HCT116 (cell line): ENCODE measurements at regions of chr16 and their contacts with region 1.

Region 1: GRCh38 chr16:67372664-67373063 is 20.6 kb downstream of the TPPP3 start:
- DNase-seq: peak; percentile 12
- ATAC-seq: peak; percentile 69
- H3K4me3 ChIP-seq: no peak overlapping the region
- H3K27ac ChIP-seq: no peak overlapping the region
- H3K4me1 ChIP-seq: no peaks in the 10 kb centered on the region
- H3K27me3 ChIP-seq: no peaks in the 10 kb centered on the region
- CTCF ChIP-seq: peak; percentile 38 to 83 (median 64); a peak in 5 of 6 replicates
- POLR2A ChIP-seq: no peak
- RAD21 ChIP-seq: peak; percentile 75

Region 2: GRCh38 chr16:67447508-67448076 is 74.9 kb after region 1 on chr16:
- CTCF ChIA-PET with region 1: interaction called, 3 read pairs
- POLR2A ChIA-PET with region 1: no interaction called
- RAD21 ChIA-PET with region 1: no interaction called
- intact Hi-C with region 1: loop called (anchors 1 kb)
- DNase-seq: peak; percentile 54
- ATAC-seq: peak; percentile 99
- H3K4me3 ChIP-seq: no peak overlapping the region
- H3K27ac ChIP-seq: no peak overlapping the region
- H3K4me1 ChIP-seq: peaks cover 0 to 3% of the 10 kb centered on the region in 2 experiments; a peak in 1 of 4 replicates
- H3K27me3 ChIP-seq: no peaks in the 10 kb centered on the region
- CTCF ChIP-seq: peak; percentile 85 to 93 (median 91)
- POLR2A ChIP-seq: no peak
- RAD21 ChIP-seq: peak; percentile 94

Region 3: DNA sequence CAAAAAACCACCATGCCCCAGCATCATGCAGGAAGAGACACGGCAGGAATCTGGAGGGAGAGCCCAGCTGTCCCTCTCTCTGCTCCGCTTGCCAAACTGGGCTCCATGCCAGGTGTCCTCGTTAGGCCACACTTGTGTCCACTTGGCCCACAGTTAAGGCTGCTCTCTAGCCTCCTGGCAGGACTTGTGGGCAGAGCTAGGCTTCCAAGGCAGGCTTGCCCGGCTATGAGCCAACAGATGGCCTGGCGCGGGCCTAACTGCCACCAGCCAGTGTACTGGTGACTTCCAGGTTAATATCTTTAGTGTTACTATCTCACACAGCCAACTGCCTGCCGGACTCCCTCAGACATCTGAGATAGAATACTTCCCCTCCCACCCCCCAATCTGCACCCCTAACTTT is 97.7 kb after region 1 on chr16:
- CTCF ChIA-PET with region 1: no interaction called
- POLR2A ChIA-PET with region 1: no interaction called
- RAD21 ChIA-PET with region 1: no interaction called
- intact Hi-C with region 1: loop called (anchors 1 kb)
- DNase-seq: no peak
- ATAC-seq: no peak
- H3K4me3 ChIP-seq: no peak overlapping the region
- H3K27ac ChIP-seq: no peak overlapping the region
- H3K4me1 ChIP-seq: peaks cover 3 to 8% of the 10 kb centered on the region in 2 experiments; a peak in 3 of 4 replicates
- H3K27me3 ChIP-seq: no peaks in the 10 kb centered on the region
- CTCF ChIP-seq: no peak
- POLR2A ChIP-seq: no peak
- RAD21 ChIP-seq: no peak

Region 4: DNA sequence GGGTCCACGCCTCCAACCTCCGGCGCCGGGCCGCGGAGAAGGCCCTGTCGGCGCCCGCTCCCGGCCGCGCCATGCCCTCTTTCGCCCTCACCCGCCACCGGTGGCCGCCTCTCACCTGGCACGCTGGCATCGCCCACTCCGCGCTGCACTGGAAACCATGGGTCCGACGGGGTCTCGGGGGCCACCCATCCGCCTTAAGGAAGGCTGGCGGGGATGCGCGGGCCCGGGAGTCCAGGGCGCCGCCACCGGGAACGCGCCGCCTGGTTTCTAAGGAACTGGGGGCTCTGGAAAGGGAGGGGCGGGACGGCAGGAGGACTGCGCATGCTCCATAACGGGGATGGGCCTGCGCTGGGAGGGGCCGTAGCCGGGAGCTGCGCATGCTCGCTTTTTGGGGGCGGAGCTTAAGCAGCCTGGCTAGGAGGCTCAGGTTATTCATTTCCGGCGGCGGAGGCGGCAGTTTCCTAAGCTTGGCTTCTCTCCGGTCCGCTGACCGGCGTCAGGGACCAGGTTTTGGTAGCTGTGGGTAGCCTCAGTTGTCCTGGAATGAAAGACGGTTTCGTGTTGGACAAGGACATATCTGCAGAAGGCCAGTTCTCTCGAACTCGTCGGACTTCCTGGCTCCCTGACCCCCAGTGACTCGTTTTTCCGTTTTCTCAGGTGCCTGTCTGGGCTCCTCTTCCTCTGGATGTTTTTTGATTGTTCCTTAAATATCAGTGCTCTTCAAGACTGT is 346.5 kb after region 1 on chr16 and contains the start of gene GFOD2:
- CTCF ChIA-PET with region 1: no interaction called
- POLR2A ChIA-PET with region 1: no interaction called
- RAD21 ChIA-PET with region 1: no interaction called
- intact Hi-C with region 1: no loop called
- DNase-seq: peak; percentile 86
- ATAC-seq: peak; percentile 91
- H3K4me3 ChIP-seq: peak within 1 kb of the TSS; percentile 84 to 96
- H3K27ac ChIP-seq: peak within 1 kb of the TSS; percentile 55
- H3K4me1 ChIP-seq: peaks cover 7 to 19% of the 10 kb centered on the region in 2 experiments; a peak in 3 of 4 replicates
- H3K27me3 ChIP-seq: no peaks in the 10 kb centered on the region
- CTCF ChIP-seq: no peak
- POLR2A ChIP-seq: peak; percentile 92
- RAD21 ChIP-seq: no peak
- total RNA-seq, gene GFOD2: 17.4 TPM